Sigmoid colon (tissue), 7 donors: ENCODE measurements at regions of chr11 and their contacts with region 1.

Region 1: GRCh38 chr11:72222907-72223614 is 1.5 kb upstream of the INPPL1 start:
- DNase-seq: peak; percentile 98
- H3K4me3 ChIP-seq: peak overlapping the region; percentile 65 to 91 (median 80)
- H3K27ac ChIP-seq: peak overlapping the region; percentile 95 to 99 (median 98)
- H3K4me1 ChIP-seq: peaks cover 2 to 44% (median 39%) of the 10 kb centered on the region in 4 donors
- H3K27me3 ChIP-seq: no peaks in the 10 kb centered on the region
- CTCF ChIP-seq: peak in 2 of 4 experiments; percentile 11 to 24
- EP300 ChIP-seq: no peak
- POLR2A ChIP-seq: peak; percentile 74 to 84

Region 2: DNA sequence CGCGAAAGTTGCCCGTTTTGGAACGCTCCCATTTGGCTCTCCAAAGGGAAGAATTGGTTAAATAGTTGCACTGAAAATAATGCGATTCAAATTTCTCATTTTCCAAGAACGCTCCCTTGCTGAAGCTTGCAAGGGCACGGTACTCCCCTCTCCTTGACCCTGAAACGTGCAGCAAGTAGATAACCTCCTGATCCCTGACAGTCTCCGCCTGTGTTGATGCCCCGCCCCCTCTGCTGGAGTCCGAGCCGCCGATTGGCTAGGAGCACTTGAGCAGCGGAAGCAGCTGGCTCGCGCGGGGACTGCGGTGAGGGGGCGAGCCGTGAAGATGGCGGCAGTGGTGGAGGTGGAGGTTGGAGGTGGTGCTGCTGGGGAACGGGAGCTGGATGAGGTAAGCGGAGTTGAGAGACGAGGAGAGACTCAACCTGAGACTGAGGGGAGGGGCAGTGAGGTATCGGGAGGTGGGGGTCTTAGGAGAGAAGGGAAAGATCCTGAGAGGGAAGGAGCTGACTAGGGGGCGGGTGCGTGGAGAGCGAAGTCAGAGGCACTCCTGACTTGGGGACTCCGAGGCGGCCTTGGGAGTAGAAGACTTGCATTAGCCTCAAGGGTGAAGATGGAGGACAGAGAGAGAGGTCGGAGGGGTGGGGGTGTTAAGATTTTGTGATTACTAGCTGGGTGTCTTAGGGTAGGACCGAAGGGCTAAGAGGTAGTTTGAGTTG is 294.2 kb before region 1 on chr11 and contains the start of gene RNF121:
- intact Hi-C with region 1: loop called (anchors 5 kb)
- DNase-seq: peak; percentile 98
- H3K4me3 ChIP-seq: peak within 1 kb of the TSS; percentile 65 to 93 (median 80)
- H3K27ac ChIP-seq: peak within 1 kb of the TSS; percentile 83 to 91 (median 86)
- H3K4me1 ChIP-seq: peaks cover 0 to 44% (median 34%) of the 10 kb centered on the region in 4 donors
- H3K27me3 ChIP-seq: no peaks in the 10 kb centered on the region
- CTCF ChIP-seq: no peak
- EP300 ChIP-seq: no peak
- POLR2A ChIP-seq: peak; percentile 62 to 71
- total RNA-seq, gene RNF121: 25.2 to 34.6 (median 25.3) TPM

Region 3: DNA sequence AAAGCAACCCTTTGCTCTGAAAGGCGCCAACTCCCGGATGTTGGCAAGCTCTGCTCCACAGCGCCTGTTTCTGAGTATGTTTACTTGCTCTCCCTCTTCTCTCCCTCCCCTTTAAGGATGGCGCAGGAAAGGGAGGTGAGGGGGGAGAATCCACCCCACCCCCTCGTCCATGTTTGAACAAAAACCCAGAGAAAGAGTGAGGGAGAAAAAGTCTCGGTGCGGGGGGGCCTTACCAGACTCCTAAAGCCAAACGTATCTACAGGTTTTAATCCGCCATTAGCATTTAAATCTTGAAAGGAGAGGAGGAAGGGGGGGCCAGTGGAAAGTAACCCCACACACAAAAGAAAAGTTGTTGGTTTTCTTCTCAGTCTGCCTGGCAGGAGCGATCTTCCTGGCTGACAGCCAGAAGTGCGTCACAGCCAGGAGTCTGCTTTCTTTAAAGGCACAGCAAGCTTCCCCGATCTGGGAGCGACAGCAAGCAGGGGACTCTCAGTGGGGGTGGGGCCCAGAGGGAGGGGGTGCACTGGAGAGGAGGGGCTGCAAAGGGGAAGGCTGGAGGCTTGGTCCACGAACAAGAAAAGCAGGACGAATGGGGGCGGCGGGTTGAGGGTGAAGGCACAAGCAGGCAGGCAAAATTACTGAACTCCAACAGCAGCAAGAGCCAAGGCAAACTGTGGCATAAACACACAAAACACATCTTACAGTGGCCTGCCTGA is 182.2 kb before region 1 on chr11:
- intact Hi-C with region 1: loop called (anchors 5 kb)
- DNase-seq: peak; percentile 99
- H3K4me3 ChIP-seq: peak overlapping the region; percentile 50 to 68 (median 62)
- H3K27ac ChIP-seq: peak overlapping the region; percentile 96 to 98 (median 97)
- H3K4me1 ChIP-seq: peaks cover 0 to 76% (median 67%) of the 10 kb centered on the region in 4 donors
- H3K27me3 ChIP-seq: no peaks in the 10 kb centered on the region
- CTCF ChIP-seq: no peak
- EP300 ChIP-seq: peak in 2 of 4 donors; percentile 28 to 47
- POLR2A ChIP-seq: peak in 1 of 2 donors; percentile 57